CD4-positive, alpha-beta T cell (primary cell): ENCODE measurements at regions of chr1 and their contacts with region 1.

Region 1: DNA sequence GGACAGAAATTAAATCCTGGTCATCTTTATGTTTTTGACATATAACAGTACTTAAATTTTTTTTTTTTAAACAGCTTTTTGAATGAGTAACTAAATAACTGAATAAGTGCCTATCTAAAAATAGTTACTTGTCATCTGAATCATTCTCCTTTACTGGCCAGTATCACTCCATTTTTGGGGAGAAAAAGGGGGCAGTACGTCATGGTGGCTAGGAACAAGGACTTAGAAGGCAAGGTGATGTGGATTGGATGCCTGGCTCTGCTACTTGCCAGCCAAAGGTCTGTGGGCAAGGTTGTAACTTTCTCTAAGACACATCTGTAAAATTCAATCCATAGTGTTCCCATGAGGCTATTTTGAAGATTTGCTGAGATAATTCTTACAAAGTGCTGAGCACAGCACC is 220.4 kb upstream of the DEPDC1 start:
- DNase-seq: no peak
- ATAC-seq: no peak
- H3K4me3 ChIP-seq: no peak overlapping the region
- H3K4me3 Mint-ChIP-seq: no peak overlapping the region
- H3K27ac ChIP-seq: no peak overlapping the region
- H3K27ac Mint-ChIP-seq: no peak overlapping the region
- H3K4me1 ChIP-seq: no peaks in the 10 kb centered on the region
- H3K4me1 Mint-ChIP-seq: no peaks in the 10 kb centered on the region
- H3K27me3 ChIP-seq: no peaks in the 10 kb centered on the region
- H3K27me3 Mint-ChIP-seq: no peaks in the 10 kb centered on the region
- CTCF ChIP-seq: no peak

Region 2: DNA sequence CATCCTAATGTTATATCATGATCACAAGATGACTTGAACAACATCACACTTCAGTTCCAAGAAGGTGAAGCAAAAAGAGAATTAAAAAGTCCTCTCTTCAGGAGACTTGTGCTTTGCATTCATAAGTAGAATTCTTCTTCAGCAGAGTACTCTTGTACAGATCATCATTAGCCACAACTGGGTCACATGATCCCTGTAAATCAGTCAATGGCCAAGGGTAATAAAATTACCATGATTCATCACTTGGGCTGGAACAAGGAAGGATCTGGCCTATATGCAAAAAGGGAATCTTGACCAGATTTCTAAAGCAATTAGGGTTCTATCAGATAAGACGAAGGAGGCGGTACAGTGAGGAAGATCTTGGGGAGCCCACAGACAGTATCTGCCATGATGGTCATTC is 237.5 kb after region 1 on chr1:
- CTCF ChIA-PET with region 1: no interaction called
- POLR2A ChIA-PET with region 1: no interaction called
- intact Hi-C with region 1: no loop called
- DNase-seq: no peak
- ATAC-seq: no peak
- H3K4me3 ChIP-seq: no peak overlapping the region
- H3K4me3 Mint-ChIP-seq: no peak overlapping the region
- H3K27ac ChIP-seq: no peak overlapping the region
- H3K27ac Mint-ChIP-seq: no peak overlapping the region
- H3K4me1 ChIP-seq: no peaks in the 10 kb centered on the region
- H3K4me1 Mint-ChIP-seq: no peaks in the 10 kb centered on the region
- H3K27me3 ChIP-seq: no peaks in the 10 kb centered on the region
- H3K27me3 Mint-ChIP-seq: no peaks in the 10 kb centered on the region
- CTCF ChIP-seq: no peak

Region 3: GRCh38 chr1:69824932-69825331 is 1107.6 kb after region 1 on chr1:
- CTCF ChIA-PET with region 1: no interaction called
- POLR2A ChIA-PET with region 1: no interaction called
- intact Hi-C with region 1: loop called in 1 of 2 experiments (anchors 5 kb)
- DNase-seq: no peak
- ATAC-seq: no peak
- H3K4me3 ChIP-seq: no peak overlapping the region
- H3K4me3 Mint-ChIP-seq: no peak overlapping the region
- H3K27ac ChIP-seq: no peak overlapping the region
- H3K27ac Mint-ChIP-seq: no peak overlapping the region
- H3K4me1 ChIP-seq: no peaks in the 10 kb centered on the region
- H3K4me1 Mint-ChIP-seq: no peaks in the 10 kb centered on the region
- H3K27me3 ChIP-seq: no peaks in the 10 kb centered on the region
- H3K27me3 Mint-ChIP-seq: no peaks in the 10 kb centered on the region
- CTCF ChIP-seq: no peak